Breast epithelium (tissue), 4 donors: ENCODE measurements at regions of chr22 and their contacts with region 1.

Region 1: GRCh38 chr22:19730655-19731360 is 7.5 kb downstream of the GP1BB start:
- DNase-seq: peak; percentile 60 to 85
- H3K4me3 ChIP-seq: peak overlapping the region; percentile 24 to 62 (median 41)
- H3K27ac ChIP-seq: no peak overlapping the region
- H3K4me1 ChIP-seq: no peaks in the 10 kb centered on the region
- H3K27me3 ChIP-seq: no peaks in the 10 kb centered on the region
- CTCF ChIP-seq: peak; percentile 87 to 98 (median 98)
- POLR2A ChIP-seq: no peak

Region 2: GRCh38 chr22:19811811-19812771 is 81.3 kb after region 1 on chr22:
- intact Hi-C with region 1: no loop called
- DNase-seq: peak; percentile 13 to 44
- H3K4me3 ChIP-seq: no peak overlapping the region
- H3K27ac ChIP-seq: no peak overlapping the region
- H3K4me1 ChIP-seq: no peaks in the 10 kb centered on the region
- H3K27me3 ChIP-seq: no peaks in the 10 kb centered on the region
- CTCF ChIP-seq: no peak
- POLR2A ChIP-seq: no peak

Region 3: DNA sequence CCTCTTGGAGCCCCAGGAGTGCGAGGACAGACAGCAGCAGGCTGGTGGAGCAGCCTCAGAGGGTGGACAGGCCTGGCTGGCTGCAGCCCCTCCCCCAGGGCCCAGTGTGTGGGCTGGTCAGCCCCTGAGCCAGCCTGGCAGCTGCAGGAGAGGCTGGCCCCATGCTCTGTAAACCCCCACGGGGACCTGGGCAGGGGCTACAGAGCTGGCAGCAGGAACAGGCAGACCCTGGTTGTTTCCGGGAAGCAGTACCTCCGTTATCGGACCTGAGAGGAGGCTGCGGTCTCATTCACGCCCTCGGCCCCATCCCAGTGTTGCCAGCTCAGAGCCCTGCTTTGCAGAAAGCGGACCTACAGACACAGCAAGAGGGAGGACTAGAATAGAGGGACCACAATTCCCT is 172.2 kb after region 1 on chr22:
- intact Hi-C with region 1: loop called (anchors 5 kb)
- DNase-seq: no peak
- H3K4me3 ChIP-seq: no peak overlapping the region
- H3K27ac ChIP-seq: no peak overlapping the region
- H3K4me1 ChIP-seq: no peaks in the 10 kb centered on the region
- H3K27me3 ChIP-seq: no peaks in the 10 kb centered on the region
- CTCF ChIP-seq: no peak
- POLR2A ChIP-seq: no peak

Region 4: DNA sequence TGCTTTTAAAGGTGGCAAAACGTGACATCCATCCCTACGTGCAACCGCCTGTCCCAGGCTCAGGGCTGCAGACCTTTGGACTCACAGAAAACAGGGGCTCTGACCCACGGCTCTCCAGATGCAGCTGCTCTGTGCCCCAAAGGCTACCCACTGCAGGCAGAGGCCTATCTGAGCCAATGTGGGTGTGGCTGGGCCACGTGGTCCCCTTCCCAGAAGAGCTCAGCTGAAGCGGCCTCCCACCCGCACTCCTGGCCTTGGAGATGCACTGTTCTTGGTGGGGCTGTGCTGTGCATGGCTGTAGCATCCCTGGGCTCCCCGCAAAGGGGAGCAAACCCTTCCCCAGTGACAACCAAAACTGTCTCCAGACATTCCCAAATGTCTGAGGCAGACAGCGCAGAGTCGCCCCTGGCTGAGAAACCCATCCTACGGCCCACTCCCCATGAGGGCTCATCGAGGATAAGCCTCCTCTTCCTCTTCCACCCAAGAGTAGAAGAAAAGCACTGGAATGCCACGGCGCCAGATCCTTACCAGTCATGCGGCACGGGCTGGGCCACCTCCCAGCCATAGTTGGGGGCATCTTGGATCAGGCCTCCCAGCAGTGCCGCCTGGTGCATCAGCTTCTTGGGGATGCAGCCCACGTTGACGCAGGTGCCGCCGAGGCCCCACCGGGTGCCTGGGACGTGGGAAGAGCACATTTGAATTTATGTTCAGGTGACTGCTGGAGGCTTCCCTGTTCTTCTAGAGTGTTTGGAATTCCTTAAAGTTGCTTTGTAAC is 187.7 kb after region 1 on chr22:
- intact Hi-C with region 1: loop called (anchors 5 kb)
- DNase-seq: no peak
- H3K4me3 ChIP-seq: no peak overlapping the region
- H3K27ac ChIP-seq: no peak overlapping the region
- H3K4me1 ChIP-seq: no peaks in the 10 kb centered on the region
- H3K27me3 ChIP-seq: no peaks in the 10 kb centered on the region
- CTCF ChIP-seq: no peak
- POLR2A ChIP-seq: no peak

Region 5: GRCh38 chr22:20111045-20111688 is 380.4 kb after region 1 on chr22:
- intact Hi-C with region 1: loop called (anchors 5 kb)
- DNase-seq: no peak
- H3K4me3 ChIP-seq: no peak overlapping the region
- H3K27ac ChIP-seq: no peak overlapping the region
- H3K4me1 ChIP-seq: peaks cover 5% of the 10 kb centered on the region in 2 donors
- H3K27me3 ChIP-seq: no peaks in the 10 kb centered on the region
- CTCF ChIP-seq: peak in 1 of 3 donors; percentile 6
- POLR2A ChIP-seq: no peak